Heart left ventricle (tissue), 16 donors: ENCODE measurements at regions of chr5 and their contacts with region 1.

Region 1: DNA sequence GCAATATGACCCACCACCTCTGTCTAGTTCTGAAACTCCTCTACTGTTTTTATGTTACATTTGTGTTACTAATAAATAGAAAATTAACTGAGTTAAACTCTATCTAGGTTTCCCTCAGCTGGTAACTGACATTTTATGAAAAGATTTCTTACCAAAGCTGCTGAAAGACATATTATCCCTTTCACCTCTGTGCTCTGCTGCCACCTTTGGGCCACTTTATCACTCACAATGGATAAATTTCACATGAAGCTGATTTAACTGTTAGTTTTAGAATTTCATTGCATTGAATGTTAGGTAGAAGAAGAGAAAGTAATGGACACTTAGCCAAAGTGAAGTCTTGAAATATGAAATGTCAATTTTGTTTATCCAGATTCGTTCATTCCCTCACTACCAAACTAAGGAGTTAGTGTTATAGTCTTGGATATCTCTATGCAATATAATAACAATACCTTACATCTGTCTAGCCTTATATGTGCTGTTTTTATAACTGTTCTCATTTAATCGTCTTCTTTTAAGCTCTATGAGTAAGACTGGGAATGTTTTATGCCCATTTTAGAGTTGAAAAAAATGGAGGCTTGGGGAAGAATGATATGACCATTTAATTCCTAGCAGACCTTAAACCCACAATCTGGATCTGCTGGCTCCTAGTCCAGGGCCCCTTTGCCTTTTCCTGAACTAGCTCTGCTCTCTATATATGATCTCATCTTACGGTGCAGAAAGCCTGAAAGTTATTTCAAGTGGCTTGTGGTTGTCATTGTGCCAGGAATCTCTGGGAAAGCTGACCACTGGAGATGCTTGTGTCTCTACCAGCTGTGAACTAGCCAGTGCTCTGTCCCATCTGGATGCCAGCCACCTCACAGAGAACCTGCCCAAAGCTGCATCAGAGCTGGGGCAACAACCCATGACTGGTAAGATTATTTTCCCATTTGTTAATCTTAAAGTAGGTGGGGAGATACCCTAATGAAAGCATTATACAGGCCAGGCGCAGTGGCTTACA is 97.1 kb downstream of the GOLPH3 start:
- DNase-seq: peak in 4 of 5 donors; percentile 66 to 76 (median 68)
- ATAC-seq: peak; percentile 79 to 92 (median 86)
- H3K4me3 ChIP-seq: no peak overlapping the region
- H3K27ac ChIP-seq: peak overlapping the region in 10 of 12 donors; percentile 18 to 68 (median 55)
- H3K4me1 ChIP-seq: peaks cover 0 to 15% (median 3%) of the 10 kb centered on the region in 12 donors
- H3K27me3 ChIP-seq: no peaks in the 10 kb centered on the region
- CTCF ChIP-seq: peak; percentile 64 to 89 (median 76)
- POLR2A ChIP-seq: no peak

Region 2: DNA sequence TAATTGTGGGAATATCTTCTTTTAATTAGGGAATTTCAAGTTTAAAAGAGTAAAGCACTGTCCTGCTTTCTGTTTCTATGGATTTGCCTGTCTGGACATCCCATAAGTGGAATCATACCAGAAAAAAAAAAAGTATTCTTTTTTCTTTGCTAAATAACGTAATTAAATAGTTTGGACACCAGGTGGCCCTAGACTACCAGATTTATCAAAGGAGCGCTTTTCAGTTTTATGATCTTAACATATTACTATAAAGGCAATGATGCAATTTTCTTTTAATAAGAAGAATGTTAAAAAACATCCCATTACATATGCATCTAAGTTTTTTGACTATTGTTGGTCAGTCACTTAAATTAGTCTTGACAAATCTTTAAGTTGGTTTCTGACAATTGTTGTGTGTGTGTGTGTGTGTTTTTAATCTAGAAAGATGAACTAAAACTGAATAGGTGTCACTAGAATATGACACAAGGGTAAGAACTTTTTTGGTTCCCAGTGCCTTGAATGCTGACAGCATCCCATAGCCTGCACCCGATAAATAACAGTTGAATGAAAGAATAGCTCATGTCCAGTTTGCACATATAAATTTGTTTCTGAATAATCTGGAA is 495.4 kb before region 1 on chr5:
- intact Hi-C with region 1: loop called in 3 of 10 experiments (anchors 5 kb)
- DNase-seq: no peak
- ATAC-seq: peak in 1 of 4 donors; percentile 39
- H3K4me3 ChIP-seq: no peak overlapping the region
- H3K27ac ChIP-seq: no peak overlapping the region
- H3K4me1 ChIP-seq: no peaks in the 10 kb centered on the region
- H3K27me3 ChIP-seq: no peaks in the 10 kb centered on the region
- CTCF ChIP-seq: peak; percentile 39 to 79 (median 63)
- POLR2A ChIP-seq: no peak

Region 3: GRCh38 chr5:31825518-31826068 is 251.4 kb before region 1 on chr5:
- intact Hi-C with region 1: loop called (anchors 1 to 5 kb)
- DNase-seq: peak in 2 of 5 donors; percentile 48
- ATAC-seq: peak; percentile 75 to 88 (median 83)
- H3K4me3 ChIP-seq: no peak overlapping the region
- H3K27ac ChIP-seq: peak overlapping the region in 2 of 12 donors; percentile 9 to 10
- H3K4me1 ChIP-seq: peaks cover 0 to 18% (median 12%) of the 10 kb centered on the region in 12 donors
- H3K27me3 ChIP-seq: no peaks in the 10 kb centered on the region
- CTCF ChIP-seq: peak; percentile 58 to 85 (median 74)
- POLR2A ChIP-seq: no peak

Region 4: GRCh38 chr5:31854181-31855133 is 222.5 kb before region 1 on chr5:
- intact Hi-C with region 1: loop called in 1 of 10 experiments (anchors 10 kb)
- DNase-seq: peak; percentile 47 to 78 (median 64)
- ATAC-seq: peak; percentile 71 to 83 (median 76)
- H3K4me3 ChIP-seq: peak overlapping the region; percentile 42 to 72 (median 66)
- H3K27ac ChIP-seq: peak overlapping the region; percentile 71 to 93 (median 81)
- H3K4me1 ChIP-seq: peaks cover under 1 to 48% (median 25%) of the 10 kb centered on the region in 12 donors
- H3K27me3 ChIP-seq: peaks cover 0 to 17% (median 0%) of the 10 kb centered on the region in 9 donors
- CTCF ChIP-seq: no peak
- POLR2A ChIP-seq: no peak

Region 5: DNA sequence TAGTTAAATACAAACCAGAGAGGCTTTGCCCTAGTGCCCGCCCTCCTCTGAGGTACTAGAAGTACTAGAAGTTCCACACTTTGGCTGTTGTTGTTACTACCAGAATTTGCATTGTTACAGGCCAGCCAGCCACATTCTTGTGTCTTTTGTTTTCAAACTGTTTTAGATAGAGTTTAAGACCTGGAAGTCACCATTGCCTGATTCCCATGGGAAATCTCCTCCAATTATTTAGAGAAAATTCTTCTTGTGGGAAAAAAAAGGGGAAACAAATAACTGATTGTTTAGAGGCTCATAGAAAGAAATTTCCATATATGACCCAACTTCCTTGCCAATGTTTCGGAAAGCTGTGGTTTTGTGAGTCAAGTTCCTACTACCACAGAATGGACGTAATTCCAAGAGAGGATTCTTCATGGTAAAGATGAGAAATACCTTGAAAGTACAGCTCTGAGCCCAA is 155.1 kb before region 1 on chr5:
- intact Hi-C with region 1: loop called in 5 of 10 experiments (anchors 5 to 10 kb)
- DNase-seq: no peak
- ATAC-seq: peak; percentile 16 to 32 (median 28)
- H3K4me3 ChIP-seq: no peak overlapping the region
- H3K27ac ChIP-seq: peak overlapping the region in 7 of 12 donors; percentile 3 to 56 (median 35)
- H3K4me1 ChIP-seq: peaks cover 0 to 33% (median 10%) of the 10 kb centered on the region in 12 donors
- H3K27me3 ChIP-seq: no peaks in the 10 kb centered on the region
- CTCF ChIP-seq: no peak
- POLR2A ChIP-seq: no peak

Region 6: GRCh38 chr5:31935702-31936369 is 141.2 kb before region 1 on chr5:
- intact Hi-C with region 1: loop called in 1 of 10 experiments (anchors 10 kb)
- DNase-seq: no peak
- ATAC-seq: peak; percentile 43 to 58 (median 55)
- H3K4me3 ChIP-seq: peak overlapping the region in 2 of 12 donors; percentile 18 to 30
- H3K27ac ChIP-seq: peak overlapping the region in 2 of 12 donors; percentile 4 to 26
- H3K4me1 ChIP-seq: peaks cover 4 to 33% (median 15%) of the 10 kb centered on the region in 12 donors
- H3K27me3 ChIP-seq: no peaks in the 10 kb centered on the region
- CTCF ChIP-seq: no peak
- POLR2A ChIP-seq: no peak

Region 7: GRCh38 chr5:31993165-31993961 is 83.6 kb before region 1 on chr5:
- intact Hi-C with region 1: no loop called
- DNase-seq: no peak
- ATAC-seq: peak in 1 of 4 donors; percentile 16
- H3K4me3 ChIP-seq: no peak overlapping the region
- H3K27ac ChIP-seq: no peak overlapping the region
- H3K4me1 ChIP-seq: peaks cover 0 to 39% (median 16%) of the 10 kb centered on the region in 12 donors
- H3K27me3 ChIP-seq: no peaks in the 10 kb centered on the region
- CTCF ChIP-seq: no peak
- POLR2A ChIP-seq: no peak

Region 8: GRCh38 chr5:32202394-32202793 is 125.4 kb after region 1 on chr5:
- intact Hi-C with region 1: no loop called
- DNase-seq: no peak
- ATAC-seq: peak; percentile 62 to 70 (median 64)
- H3K4me3 ChIP-seq: no peak overlapping the region
- H3K27ac ChIP-seq: peak overlapping the region in 1 of 12 donors; percentile 27
- H3K4me1 ChIP-seq: peaks cover 0 to 35% (median 7%) of the 10 kb centered on the region in 12 donors
- H3K27me3 ChIP-seq: no peaks in the 10 kb centered on the region
- CTCF ChIP-seq: no peak
- POLR2A ChIP-seq: no peak

Region 9: DNA sequence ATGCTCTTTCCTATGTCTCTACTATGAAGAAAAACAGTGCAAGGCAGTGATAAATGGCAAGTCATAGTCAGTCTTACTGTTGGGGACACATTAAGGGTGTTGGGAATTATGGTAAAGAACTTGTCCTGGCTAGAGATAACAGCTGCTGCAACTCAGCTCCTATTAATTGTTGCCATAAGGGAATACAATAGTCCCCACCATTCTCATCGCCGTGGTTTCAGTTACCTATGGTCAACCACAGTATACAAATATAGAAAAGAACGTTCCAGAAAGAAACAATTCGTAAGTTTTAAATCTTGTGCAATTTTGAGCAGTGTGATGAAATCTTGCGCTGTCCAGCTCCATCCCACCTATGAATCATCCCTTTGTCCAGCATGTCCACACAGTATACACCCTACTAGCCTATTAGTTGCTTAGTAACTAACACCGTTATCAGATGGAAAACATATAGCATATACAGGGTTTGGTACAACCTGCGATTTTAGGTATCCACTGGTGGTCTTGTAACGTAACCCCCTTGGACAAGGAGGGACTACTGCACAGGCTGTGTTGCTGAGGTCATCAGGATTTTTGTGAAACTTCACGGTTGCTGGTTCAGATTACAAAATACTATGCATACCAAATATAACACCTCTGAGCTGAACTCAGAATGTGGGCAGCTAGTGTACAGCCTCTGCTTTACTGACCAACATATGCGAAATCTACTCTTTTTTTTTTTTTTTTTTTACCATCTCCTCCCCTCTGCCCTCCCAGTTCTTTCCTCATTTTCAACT is 314.0 kb after region 1 on chr5:
- intact Hi-C with region 1: no loop called
- DNase-seq: no peak
- ATAC-seq: peak in 2 of 4 donors; percentile 66 to 72
- H3K4me3 ChIP-seq: no peak overlapping the region
- H3K27ac ChIP-seq: no peak overlapping the region
- H3K4me1 ChIP-seq: peaks cover 0 to 10% (median 0%) of the 10 kb centered on the region in 12 donors
- H3K27me3 ChIP-seq: no peaks in the 10 kb centered on the region
- CTCF ChIP-seq: no peak
- POLR2A ChIP-seq: no peak